Left ventricle myocardium superior (tissue), 1 donor: ENCODE measurements at regions of chr2 and their contacts with region 1.

Region 1: GRCh38 chr2:101012706-101013181 is 10.7 kb downstream of the RPL31 start:
- DNase-seq: no peak
- ATAC-seq: no peak

Region 2: DNA sequence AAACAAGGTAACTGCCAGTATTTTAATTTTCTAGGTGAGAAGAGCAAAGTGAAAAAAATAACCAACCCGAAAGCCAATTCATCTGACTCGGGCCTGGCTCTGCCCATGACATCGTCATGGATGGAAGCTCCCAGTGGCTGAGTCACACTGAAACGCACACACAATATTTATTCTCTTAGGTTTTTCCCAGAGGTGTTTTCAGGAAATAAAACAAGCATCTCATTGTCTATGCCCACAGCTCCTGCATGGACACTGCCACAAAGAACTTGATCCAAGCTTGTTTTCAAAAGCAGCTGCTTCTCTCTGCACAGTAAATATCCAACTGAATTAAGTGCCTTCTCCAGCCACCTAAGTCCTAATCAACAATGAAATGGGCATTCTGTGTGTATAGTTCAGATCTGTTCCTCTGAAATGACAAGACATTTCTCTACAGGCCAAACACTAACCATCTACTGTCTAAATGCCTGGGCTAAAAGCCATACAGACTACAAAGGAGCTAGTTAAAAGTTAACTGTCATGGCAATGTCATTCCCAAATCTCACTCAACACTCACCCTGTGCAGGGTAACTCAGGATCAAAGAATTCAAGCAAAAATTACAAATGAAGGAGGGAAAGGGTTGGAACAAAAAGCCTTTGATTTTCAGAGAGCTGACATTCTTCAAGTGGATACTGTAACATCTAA is 52.3 kb after region 1 on chr2:
- intact Hi-C with region 1: no loop called
- DNase-seq: no peak
- ATAC-seq: peak; percentile 36

Region 3: GRCh38 chr2:101151141-101151858 is 138.6 kb after region 1 on chr2 and contains the start of gene TBC1D8:
- intact Hi-C with region 1: loop called (anchors 5 kb)
- DNase-seq: peak; percentile 94
- ATAC-seq: peak; percentile 85
- total RNA-seq, gene TBC1D8: 47.8 TPM

Region 4: GRCh38 chr2:101380376-101380775 is 367.6 kb after region 1 on chr2:
- intact Hi-C with region 1: no loop called
- DNase-seq: peak; percentile 59
- ATAC-seq: peak; percentile 94